HCT116 (cell line): ENCODE measurements at regions of chr6 and their contacts with region 1.

Region 1: DNA sequence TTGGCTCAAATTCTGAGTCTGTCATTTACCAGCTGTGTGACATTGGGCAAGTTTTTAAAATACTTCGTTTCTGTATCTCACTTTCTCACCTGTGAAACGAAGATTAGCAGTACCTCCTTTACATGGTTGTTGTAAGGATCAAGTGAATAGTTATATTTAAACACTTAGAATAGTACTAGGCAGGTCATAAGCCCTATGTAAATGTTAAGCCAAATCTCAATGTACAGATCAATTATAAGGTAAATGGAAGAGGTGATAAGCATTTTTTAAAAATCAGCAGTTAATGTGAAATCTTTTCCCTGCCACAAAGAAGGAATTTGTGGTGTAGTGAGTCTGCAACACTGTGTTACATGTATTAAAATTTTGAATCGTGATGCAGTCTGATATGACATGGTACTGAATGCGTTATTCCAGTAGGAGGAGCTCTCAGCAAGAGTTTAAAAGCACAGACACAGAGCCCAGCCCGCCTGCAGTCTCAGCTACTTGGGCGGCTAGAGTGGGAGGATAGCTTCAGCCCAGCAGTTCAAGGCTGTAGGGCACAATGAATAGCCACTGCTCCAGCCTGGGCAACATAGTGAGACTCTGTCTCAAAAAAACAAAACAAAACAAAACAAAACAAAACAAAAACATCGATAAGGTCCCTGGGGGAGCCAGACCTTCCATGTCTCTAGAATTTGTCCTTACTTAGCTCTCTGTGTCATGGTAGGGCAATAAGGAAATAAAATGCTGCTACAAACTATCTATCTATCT is 46.0 kb downstream of the GTF2H5 start:
- DNase-seq: peak; percentile 75
- ATAC-seq: peak; percentile 100
- H3K4me3 ChIP-seq: no peak overlapping the region
- H3K27ac ChIP-seq: no peak overlapping the region
- H3K4me1 ChIP-seq: peaks cover 0 to 19% of the 10 kb centered on the region in 2 experiments; a peak in 3 of 4 replicates
- H3K27me3 ChIP-seq: no peaks in the 10 kb centered on the region
- CTCF ChIP-seq: peak; percentile 72 to 81 (median 79)
- POLR2A ChIP-seq: no peak
- RAD21 ChIP-seq: peak; percentile 94

Region 2: DNA sequence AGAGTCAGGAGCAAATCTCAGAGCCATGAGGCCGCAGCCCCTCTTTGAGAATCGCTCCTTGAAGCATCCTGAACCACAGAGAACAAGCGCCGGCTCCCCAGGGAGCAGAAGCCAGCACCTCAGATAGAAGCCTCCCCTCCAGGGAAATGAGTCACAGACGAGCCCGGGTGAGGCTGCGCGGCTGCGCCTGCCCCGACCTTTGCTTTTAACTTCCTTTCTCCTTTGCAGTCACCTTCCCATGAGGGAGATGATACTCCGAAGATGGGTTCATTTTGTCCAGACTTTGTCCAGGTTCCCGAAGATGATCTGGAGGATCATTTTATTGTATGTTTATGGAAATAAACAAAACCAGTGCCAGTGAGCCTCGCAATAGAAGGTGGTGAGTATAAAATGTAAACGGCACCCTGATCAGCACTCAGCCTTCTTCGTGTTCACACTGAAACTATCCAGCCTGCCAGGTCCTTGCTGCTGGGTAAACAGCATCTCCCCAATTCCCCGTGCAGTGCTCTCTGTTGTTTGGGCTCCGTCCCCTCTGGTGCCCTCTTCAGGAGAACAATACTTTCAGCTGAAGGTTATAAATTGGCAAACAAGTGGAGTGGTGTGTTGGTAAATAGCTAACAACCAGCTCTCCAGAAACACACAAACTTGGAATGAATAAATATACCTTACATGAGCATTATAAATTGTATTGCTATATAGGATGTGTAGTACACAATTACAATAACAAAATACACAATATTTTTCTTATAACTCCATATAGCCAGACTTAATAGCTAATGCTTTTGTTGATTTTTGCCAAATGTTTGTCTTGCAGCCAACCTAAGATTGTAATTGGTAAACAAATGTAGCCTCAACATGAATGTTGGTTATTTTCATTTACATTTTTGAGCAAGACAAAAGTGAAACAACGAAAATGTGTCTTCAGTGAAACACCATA is 304.4 kb after region 1 on chr6:
- CTCF ChIA-PET with region 1: interaction called, 11 read pairs
- POLR2A ChIA-PET with region 1: no interaction called
- RAD21 ChIA-PET with region 1: no interaction called
- intact Hi-C with region 1: no loop called
- DNase-seq: peak; percentile 77
- ATAC-seq: peak; percentile 94
- H3K4me3 ChIP-seq: peak overlapping the region; percentile 40 to 53
- H3K27ac ChIP-seq: 0 out of 2 replicates have a peak overlapping the region, but pooled peaks have one; percentile 15
- H3K4me1 ChIP-seq: peaks cover 6 to 18% of the 10 kb centered on the region in 2 experiments; a peak in 3 of 4 replicates
- H3K27me3 ChIP-seq: no peaks in the 10 kb centered on the region
- CTCF ChIP-seq: peak; percentile 67 to 79 (median 68); a peak in 5 of 6 replicates
- POLR2A ChIP-seq: no peak
- RAD21 ChIP-seq: peak; percentile 74

Region 3: GRCh38 chr6:158605266-158605878 is 391.3 kb after region 1 on chr6:
- CTCF ChIA-PET with region 1: interaction called, 24 read pairs
- POLR2A ChIA-PET with region 1: no interaction called
- RAD21 ChIA-PET with region 1: interaction called, 4 read pairs
- intact Hi-C with region 1: no loop called
- DNase-seq: peak; percentile 48
- ATAC-seq: peak; percentile 91
- H3K4me3 ChIP-seq: no peak overlapping the region
- H3K27ac ChIP-seq: no peak overlapping the region
- H3K4me1 ChIP-seq: no peaks in the 10 kb centered on the region
- H3K27me3 ChIP-seq: no peaks in the 10 kb centered on the region
- CTCF ChIP-seq: peak; percentile 62 to 66 (median 65); a peak in 5 of 6 replicates
- POLR2A ChIP-seq: no peak
- RAD21 ChIP-seq: peak; percentile 74